Ovary (tissue), 10 donors: ENCODE measurements at regions of chr15 and their contacts with region 1.

Region 1: DNA sequence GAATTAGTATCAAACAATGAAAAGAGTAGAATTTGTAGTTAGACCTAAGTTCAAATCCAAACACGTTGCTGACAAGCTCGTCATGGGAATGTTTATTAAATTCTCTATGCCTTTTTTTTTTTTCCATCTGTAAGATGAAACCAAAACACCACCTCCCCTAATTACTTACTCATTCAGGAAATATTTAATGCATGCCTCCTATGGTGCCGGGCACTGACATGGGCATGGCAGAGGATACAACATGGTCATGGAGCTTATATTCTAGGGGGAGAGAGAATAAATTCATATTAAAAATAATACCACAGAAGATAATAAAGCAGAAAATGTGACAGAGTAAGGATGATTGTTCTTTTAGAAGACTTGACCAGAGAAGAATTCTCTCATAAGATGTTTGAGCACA is 215.8 kb downstream of the RYR3 start:
- DNase-seq: no peak
- H3K4me3 ChIP-seq: no peak overlapping the region
- H3K27ac ChIP-seq: no peak overlapping the region
- H3K4me1 ChIP-seq: no peaks in the 10 kb centered on the region
- H3K27me3 ChIP-seq: no peaks in the 10 kb centered on the region
- CTCF ChIP-seq: no peak
- EP300 ChIP-seq: no peak
- POLR2A ChIP-seq: no peak

Region 2: GRCh38 chr15:33460149-33460805 is 66.3 kb before region 1 on chr15:
- intact Hi-C with region 1: loop called in 1 of 4 experiments (anchors 10 kb)
- DNase-seq: no peak
- H3K4me3 ChIP-seq: no peak overlapping the region
- H3K27ac ChIP-seq: no peak overlapping the region
- H3K4me1 ChIP-seq: no peaks in the 10 kb centered on the region
- H3K27me3 ChIP-seq: no peaks in the 10 kb centered on the region
- CTCF ChIP-seq: no peak
- EP300 ChIP-seq: no peak
- POLR2A ChIP-seq: no peak

Region 3: GRCh38 chr15:33766389-33766788 is 239.9 kb after region 1 on chr15:
- intact Hi-C with region 1: no loop called
- DNase-seq: no peak
- H3K4me3 ChIP-seq: no peak overlapping the region
- H3K27ac ChIP-seq: no peak overlapping the region
- H3K4me1 ChIP-seq: no peaks in the 10 kb centered on the region
- H3K27me3 ChIP-seq: no peaks in the 10 kb centered on the region
- CTCF ChIP-seq: no peak
- EP300 ChIP-seq: no peak
- POLR2A ChIP-seq: no peak